Activated CD4-positive, alpha-beta memory T cell treated with anti-CD3 and anti-CD28 coated beads for 36 hours (primary cell): ENCODE measurements at regions of chr4 and their contacts with region 1.

Region 1: DNA sequence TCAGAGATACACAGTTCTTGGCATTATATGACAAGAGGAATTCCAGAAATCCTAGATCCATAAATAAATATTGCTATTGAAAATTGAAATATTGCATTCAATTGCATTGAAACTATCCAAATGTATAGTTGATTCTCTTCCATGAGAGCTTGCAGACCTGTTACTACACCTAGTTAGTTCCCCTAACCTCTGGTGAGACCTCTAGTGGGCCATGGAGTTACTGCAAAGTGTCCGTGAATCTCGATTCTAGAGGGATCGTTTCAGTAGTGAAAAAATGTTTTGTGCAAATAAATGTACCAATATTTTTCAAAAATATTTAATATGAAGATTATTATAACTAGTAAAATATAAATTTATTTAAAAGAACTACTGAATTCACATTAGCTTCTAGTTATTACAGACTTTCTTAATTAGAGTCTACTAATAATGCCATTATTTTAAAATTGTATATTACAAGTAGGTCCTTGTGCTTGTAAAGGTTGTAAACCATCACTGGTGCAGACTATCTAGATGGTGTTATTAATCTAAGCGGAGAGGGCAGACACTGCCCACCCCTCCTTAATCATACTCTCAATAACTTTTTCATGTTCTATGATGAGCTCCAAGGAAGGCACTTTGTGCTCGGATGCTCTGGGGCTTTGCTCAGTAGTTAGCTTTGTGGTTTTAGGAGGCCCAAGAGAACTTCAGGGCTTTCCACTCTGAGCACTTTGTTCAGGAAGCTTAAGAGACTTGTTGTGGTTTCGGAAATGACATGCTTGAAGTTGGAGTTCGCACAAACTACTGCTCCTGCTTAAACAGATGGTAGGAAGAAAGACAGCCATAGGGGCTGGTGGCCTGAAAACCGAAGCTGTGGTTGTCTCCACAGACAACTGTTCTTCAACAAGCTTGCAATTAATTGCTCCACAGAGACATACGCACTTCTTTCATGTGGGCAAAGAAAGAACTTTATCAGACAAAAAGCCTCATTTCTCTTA is 42.8 kb downstream of the IL21 start:
- DNase-seq: peak; percentile 80
- H3K4me3 Mint-ChIP-seq: peak overlapping the region; percentile 62
- H3K27ac Mint-ChIP-seq: peak overlapping the region; percentile 90
- H3K4me1 Mint-ChIP-seq: peaks cover 56% of the 10 kb centered on the region
- H3K27me3 Mint-ChIP-seq: no peaks in the 10 kb centered on the region

Region 2: GRCh38 chr4:121900132-121900983 is 677.7 kb before region 1 on chr4:
- CTCF ChIA-PET with region 1: interaction called, 40 read pairs
- POLR2A ChIA-PET with region 1: no interaction called
- intact Hi-C with region 1: loop called (anchors 1 kb)
- DNase-seq: peak; percentile 58
- H3K4me3 Mint-ChIP-seq: no peak overlapping the region
- H3K27ac Mint-ChIP-seq: no peak overlapping the region
- H3K4me1 Mint-ChIP-seq: peaks cover 8% of the 10 kb centered on the region
- H3K27me3 Mint-ChIP-seq: peaks cover 6% of the 10 kb centered on the region

Region 3: GRCh38 chr4:122151982-122152710 is 425.9 kb before region 1 on chr4 and contains the start of gene BLTP1:
- CTCF ChIA-PET with region 1: interaction called, 3 read pairs
- POLR2A ChIA-PET with region 1: no interaction called
- intact Hi-C with region 1: loop called (anchors 5 kb)
- DNase-seq: peak; percentile 91
- H3K4me3 Mint-ChIP-seq: peak within 1 kb of the TSS; percentile 92
- H3K27ac Mint-ChIP-seq: peak within 1 kb of the TSS; percentile 93
- H3K4me1 Mint-ChIP-seq: peaks cover 51% of the 10 kb centered on the region
- H3K27me3 Mint-ChIP-seq: no peaks in the 10 kb centered on the region
- total RNA-seq, gene BLTP1: 26.6 to 30.7 TPM

Region 4: GRCh38 chr4:122309988-122310626 is 268.0 kb before region 1 on chr4:
- CTCF ChIA-PET with region 1: interaction called, 45 read pairs
- POLR2A ChIA-PET with region 1: no interaction called
- intact Hi-C with region 1: loop called (anchors 1 kb)
- DNase-seq: no peak
- H3K4me3 Mint-ChIP-seq: no peak overlapping the region
- H3K27ac Mint-ChIP-seq: no peak overlapping the region
- H3K4me1 Mint-ChIP-seq: peaks cover 5% of the 10 kb centered on the region
- H3K27me3 Mint-ChIP-seq: no peaks in the 10 kb centered on the region

Region 5: DNA sequence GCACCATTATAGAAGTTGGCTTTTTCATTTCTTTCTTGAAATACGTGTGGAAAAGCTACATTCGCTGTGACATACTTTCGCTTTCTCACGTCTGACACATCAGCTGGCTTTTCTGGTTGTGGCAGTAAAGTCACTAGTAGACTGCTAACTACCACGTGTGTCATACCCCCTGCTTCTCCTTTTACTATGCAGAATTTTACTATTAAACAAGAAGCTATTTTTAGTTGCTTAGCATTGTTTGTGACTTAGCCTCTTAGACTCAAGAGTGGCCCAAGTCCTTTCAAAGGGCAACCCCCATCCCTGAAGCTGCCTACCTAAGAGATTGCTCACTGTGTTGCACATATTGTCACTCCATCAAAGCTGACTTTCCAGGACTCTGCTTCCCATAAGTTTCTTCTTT is 119.5 kb before region 1 on chr4:
- CTCF ChIA-PET with region 1: interaction called, 36 read pairs
- POLR2A ChIA-PET with region 1: interaction called, 26 read pairs
- intact Hi-C with region 1: loop called (anchors 1 kb)
- DNase-seq: peak; percentile 75
- H3K4me3 Mint-ChIP-seq: peak overlapping the region; percentile 71
- H3K27ac Mint-ChIP-seq: peak overlapping the region; percentile 97
- H3K4me1 Mint-ChIP-seq: peaks cover 44% of the 10 kb centered on the region
- H3K27me3 Mint-ChIP-seq: no peaks in the 10 kb centered on the region

Region 6: GRCh38 chr4:122489061-122489460 is 89.0 kb before region 1 on chr4:
- CTCF ChIA-PET with region 1: no interaction called
- POLR2A ChIA-PET with region 1: no interaction called
- intact Hi-C with region 1: no loop called
- DNase-seq: no peak
- H3K4me3 Mint-ChIP-seq: no peak overlapping the region
- H3K27ac Mint-ChIP-seq: no peak overlapping the region
- H3K4me1 Mint-ChIP-seq: no peaks in the 10 kb centered on the region
- H3K27me3 Mint-ChIP-seq: no peaks in the 10 kb centered on the region

Region 7: DNA sequence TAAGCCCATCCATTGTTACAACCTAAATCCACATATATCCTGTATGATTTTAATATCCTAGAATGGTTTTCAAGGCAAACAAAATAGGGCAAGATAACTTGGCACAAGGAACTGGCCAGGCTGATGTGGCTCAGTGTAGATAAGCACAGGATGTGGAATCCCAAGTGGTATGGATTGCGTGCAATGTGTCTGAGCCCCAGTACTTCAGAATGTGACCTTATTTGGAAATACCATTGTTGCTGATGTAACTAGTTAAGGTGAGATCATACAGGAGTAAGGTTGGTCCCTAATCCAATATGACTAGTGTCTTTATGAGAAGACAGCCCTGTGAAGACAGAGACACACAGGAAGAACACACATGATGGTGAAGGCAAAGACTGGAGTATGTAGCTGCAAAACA is 29.6 kb before region 1 on chr4:
- CTCF ChIA-PET with region 1: interaction called, 23 read pairs
- POLR2A ChIA-PET with region 1: interaction called, 6 read pairs
- intact Hi-C with region 1: loop called (anchors 1 kb)
- DNase-seq: peak; percentile 52
- H3K4me3 Mint-ChIP-seq: peak overlapping the region; percentile 72
- H3K27ac Mint-ChIP-seq: peak overlapping the region; percentile 82
- H3K4me1 Mint-ChIP-seq: peaks cover 85% of the 10 kb centered on the region
- H3K27me3 Mint-ChIP-seq: no peaks in the 10 kb centered on the region

Region 8: GRCh38 chr4:122716825-122717448 is 138.8 kb after region 1 on chr4:
- CTCF ChIA-PET with region 1: interaction called, 20 read pairs
- POLR2A ChIA-PET with region 1: no interaction called
- intact Hi-C with region 1: loop called (anchors 1 kb)
- DNase-seq: peak; percentile 85
- H3K4me3 Mint-ChIP-seq: peak overlapping the region; percentile 37
- H3K27ac Mint-ChIP-seq: peak overlapping the region; percentile 23
- H3K4me1 Mint-ChIP-seq: peaks cover 36% of the 10 kb centered on the region
- H3K27me3 Mint-ChIP-seq: peaks cover 2% of the 10 kb centered on the region

Region 9: GRCh38 chr4:123750044-123750443 is 1171.9 kb after region 1 on chr4:
- CTCF ChIA-PET with region 1: no interaction called
- POLR2A ChIA-PET with region 1: no interaction called
- intact Hi-C with region 1: no loop called
- DNase-seq: no peak
- H3K4me3 Mint-ChIP-seq: no peak overlapping the region
- H3K27ac Mint-ChIP-seq: no peak overlapping the region
- H3K4me1 Mint-ChIP-seq: no peaks in the 10 kb centered on the region
- H3K27me3 Mint-ChIP-seq: peaks cover 4% of the 10 kb centered on the region